HCT116 (cell line): ENCODE measurements at regions of chr10 and their contacts with region 1.

Region 1: GRCh38 chr10:84429926-84430520 is 101.6 kb downstream of the CCSER2 start:
- DNase-seq: peak; percentile 61
- ATAC-seq: peak; percentile 98
- H3K4me3 ChIP-seq: no peak overlapping the region
- H3K27ac ChIP-seq: no peak overlapping the region
- H3K4me1 ChIP-seq: peaks cover 0 to 6% of the 10 kb centered on the region in 2 experiments; a peak in 2 of 4 replicates
- H3K27me3 ChIP-seq: no peaks in the 10 kb centered on the region
- CTCF ChIP-seq: peak; percentile 78 to 92 (median 90)
- POLR2A ChIP-seq: no peak
- RAD21 ChIP-seq: peak; percentile 84

Region 2: GRCh38 chr10:82668221-82668895 is 1761.7 kb before region 1 on chr10:
- CTCF ChIA-PET with region 1: no interaction called
- POLR2A ChIA-PET with region 1: no interaction called
- RAD21 ChIA-PET with region 1: no interaction called
- intact Hi-C with region 1: no loop called
- DNase-seq: no peak
- ATAC-seq: no peak
- H3K4me3 ChIP-seq: no peak overlapping the region
- H3K27ac ChIP-seq: no peak overlapping the region
- H3K4me1 ChIP-seq: no peaks in the 10 kb centered on the region
- H3K27me3 ChIP-seq: no peaks in the 10 kb centered on the region
- CTCF ChIP-seq: no peak
- POLR2A ChIP-seq: no peak
- RAD21 ChIP-seq: no peak

Region 3: DNA sequence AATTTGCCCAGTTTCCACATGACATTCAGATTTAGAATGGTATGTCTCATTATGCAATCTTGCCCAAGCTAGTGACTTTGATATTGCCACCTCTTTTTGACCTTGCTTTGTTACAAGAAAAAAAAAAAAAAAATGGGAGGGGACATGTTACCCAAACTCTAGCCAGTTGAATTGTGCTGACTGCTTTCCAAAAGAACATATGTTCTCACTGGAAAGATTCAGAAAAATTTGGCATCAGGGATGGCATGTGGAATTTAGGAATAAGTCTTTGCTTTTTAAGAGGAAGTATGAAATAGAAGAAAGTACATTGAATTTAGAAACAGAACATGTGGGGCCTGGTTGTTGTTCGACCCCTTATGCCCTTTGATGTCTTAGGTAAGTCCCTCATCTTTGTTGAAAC is 1708.2 kb before region 1 on chr10:
- CTCF ChIA-PET with region 1: no interaction called
- POLR2A ChIA-PET with region 1: no interaction called
- RAD21 ChIA-PET with region 1: no interaction called
- intact Hi-C with region 1: no loop called
- DNase-seq: no peak
- ATAC-seq: no peak
- H3K4me3 ChIP-seq: no peak overlapping the region
- H3K27ac ChIP-seq: no peak overlapping the region
- H3K4me1 ChIP-seq: no peaks in the 10 kb centered on the region
- H3K27me3 ChIP-seq: no peaks in the 10 kb centered on the region
- CTCF ChIP-seq: no peak
- POLR2A ChIP-seq: no peak
- RAD21 ChIP-seq: no peak

Region 4: DNA sequence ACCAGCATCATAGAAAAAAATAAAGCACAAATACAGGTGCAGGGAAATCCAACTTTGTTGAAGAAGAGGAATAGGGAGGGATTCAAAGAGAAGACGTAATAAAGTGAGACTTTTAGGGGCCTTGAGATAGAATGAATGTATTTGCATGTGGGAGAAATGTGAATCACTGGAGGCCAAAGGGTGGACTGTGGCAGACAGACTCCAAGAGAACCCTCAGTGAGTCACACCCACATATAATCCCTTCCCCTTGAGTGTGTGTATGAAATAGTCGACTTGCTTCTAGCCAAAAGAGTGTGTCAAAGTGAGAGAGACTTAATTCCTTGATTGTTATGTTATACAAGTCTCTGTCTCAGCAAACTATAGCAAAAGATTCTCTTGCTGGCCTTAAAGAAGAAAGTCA is 392.0 kb before region 1 on chr10:
- CTCF ChIA-PET with region 1: no interaction called
- POLR2A ChIA-PET with region 1: no interaction called
- RAD21 ChIA-PET with region 1: no interaction called
- intact Hi-C with region 1: no loop called
- DNase-seq: no peak
- ATAC-seq: no peak
- H3K4me3 ChIP-seq: no peak overlapping the region
- H3K27ac ChIP-seq: no peak overlapping the region
- H3K4me1 ChIP-seq: no peaks in the 10 kb centered on the region
- H3K27me3 ChIP-seq: no peaks in the 10 kb centered on the region; the same call in 1 of the 2 replicates
- CTCF ChIP-seq: no peak
- POLR2A ChIP-seq: no peak
- RAD21 ChIP-seq: no peak

Region 5: DNA sequence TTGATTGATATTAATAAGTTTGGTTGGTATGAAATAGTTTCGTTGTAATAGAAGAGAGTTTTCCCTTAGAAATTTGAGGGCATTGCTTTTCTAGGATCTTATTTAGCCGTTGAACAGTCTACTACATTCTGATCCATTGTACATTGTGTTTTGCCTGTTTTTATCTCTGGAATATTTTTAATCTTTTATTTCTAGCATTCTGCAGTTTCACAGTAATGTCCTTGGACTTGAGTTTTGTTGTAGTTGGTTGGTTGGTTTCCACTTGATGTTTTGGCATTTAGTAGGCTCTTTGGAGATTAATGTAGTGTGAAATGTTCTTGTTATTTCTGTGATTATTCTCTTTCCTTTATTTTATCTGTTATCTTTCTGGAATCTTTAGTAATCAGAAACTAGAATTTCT is 10.8 kb after region 1 on chr10:
- CTCF ChIA-PET with region 1: interaction called, 16 read pairs
- POLR2A ChIA-PET with region 1: no interaction called
- RAD21 ChIA-PET with region 1: no interaction called
- intact Hi-C with region 1: no loop called
- DNase-seq: no peak
- ATAC-seq: no peak
- H3K4me3 ChIP-seq: no peak overlapping the region
- H3K27ac ChIP-seq: no peak overlapping the region
- H3K4me1 ChIP-seq: no peaks in the 10 kb centered on the region
- H3K27me3 ChIP-seq: no peaks in the 10 kb centered on the region
- CTCF ChIP-seq: no peak
- POLR2A ChIP-seq: no peak
- RAD21 ChIP-seq: no peak

Region 6: DNA sequence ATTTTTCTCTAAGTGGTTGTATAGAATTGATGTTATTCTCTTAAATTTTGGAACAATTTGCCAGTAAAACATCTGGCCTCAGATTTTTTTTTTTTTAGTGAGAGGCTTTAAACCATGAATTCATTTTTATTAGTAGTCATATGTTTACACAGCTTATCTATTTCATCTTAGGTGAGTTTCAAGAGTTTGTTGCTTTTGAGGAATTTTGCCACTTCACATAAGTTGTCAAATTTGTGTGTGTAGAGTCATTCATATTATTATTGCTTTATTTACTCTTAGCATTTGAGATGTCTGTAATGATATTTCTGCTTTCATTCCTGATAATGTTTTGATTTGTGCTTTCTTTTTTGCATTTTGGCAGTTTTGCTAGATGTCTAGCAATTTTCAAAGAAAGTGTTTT is 30.5 kb after region 1 on chr10:
- CTCF ChIA-PET with region 1: no interaction called
- POLR2A ChIA-PET with region 1: no interaction called
- RAD21 ChIA-PET with region 1: no interaction called
- intact Hi-C with region 1: no loop called
- DNase-seq: no peak
- ATAC-seq: no peak
- H3K4me3 ChIP-seq: no peak overlapping the region
- H3K27ac ChIP-seq: no peak overlapping the region
- H3K4me1 ChIP-seq: no peaks in the 10 kb centered on the region
- H3K27me3 ChIP-seq: no peaks in the 10 kb centered on the region
- CTCF ChIP-seq: no peak
- POLR2A ChIP-seq: no peak
- RAD21 ChIP-seq: no peak

Region 7: GRCh38 chr10:84499846-84500245 is 69.8 kb after region 1 on chr10:
- CTCF ChIA-PET with region 1: no interaction called
- POLR2A ChIA-PET with region 1: no interaction called
- RAD21 ChIA-PET with region 1: no interaction called
- intact Hi-C with region 1: loop called (anchors 10 kb)
- DNase-seq: no peak
- ATAC-seq: no peak
- H3K4me3 ChIP-seq: no peak overlapping the region
- H3K27ac ChIP-seq: no peak overlapping the region
- H3K4me1 ChIP-seq: peaks cover 12 to 13% of the 10 kb centered on the region in 2 experiments
- H3K27me3 ChIP-seq: no peaks in the 10 kb centered on the region
- CTCF ChIP-seq: no peak
- POLR2A ChIP-seq: no peak
- RAD21 ChIP-seq: no peak